Breast epithelium (tissue), 4 donors: ENCODE measurements at regions of chr4 and their contacts with region 1.

Region 1: GRCh38 chr4:135032670-135033069 is 831.1 kb upstream of the PABPC4L start:
- DNase-seq: no peak
- H3K4me3 ChIP-seq: no peak overlapping the region
- H3K27ac ChIP-seq: no peak overlapping the region
- H3K4me1 ChIP-seq: no peaks in the 10 kb centered on the region
- H3K27me3 ChIP-seq: no peaks in the 10 kb centered on the region
- CTCF ChIP-seq: no peak
- POLR2A ChIP-seq: no peak

Region 2: DNA sequence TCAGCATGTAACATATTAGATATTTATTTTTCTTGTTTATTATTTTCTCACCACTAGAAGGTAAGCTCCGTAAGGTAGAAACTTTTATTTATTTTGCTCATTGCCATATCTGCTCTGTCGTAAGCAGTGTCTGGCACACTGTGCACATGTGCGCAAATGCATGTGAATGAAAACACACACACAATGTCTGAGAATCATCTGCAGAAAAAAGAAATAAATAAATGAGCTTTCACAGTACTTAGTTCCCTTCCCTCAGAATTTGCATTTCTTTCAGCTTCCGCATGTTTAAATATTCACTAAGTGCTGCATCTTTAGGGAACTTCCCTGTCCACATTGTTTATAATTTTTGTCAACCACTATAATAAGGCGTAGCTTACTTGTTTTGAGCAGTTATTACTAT is 131.9 kb after region 1 on chr4:
- intact Hi-C with region 1: no loop called
- DNase-seq: no peak
- H3K4me3 ChIP-seq: no peak overlapping the region
- H3K27ac ChIP-seq: no peak overlapping the region
- H3K4me1 ChIP-seq: no peaks in the 10 kb centered on the region
- H3K27me3 ChIP-seq: no peaks in the 10 kb centered on the region
- CTCF ChIP-seq: no peak
- POLR2A ChIP-seq: no peak

Region 3: DNA sequence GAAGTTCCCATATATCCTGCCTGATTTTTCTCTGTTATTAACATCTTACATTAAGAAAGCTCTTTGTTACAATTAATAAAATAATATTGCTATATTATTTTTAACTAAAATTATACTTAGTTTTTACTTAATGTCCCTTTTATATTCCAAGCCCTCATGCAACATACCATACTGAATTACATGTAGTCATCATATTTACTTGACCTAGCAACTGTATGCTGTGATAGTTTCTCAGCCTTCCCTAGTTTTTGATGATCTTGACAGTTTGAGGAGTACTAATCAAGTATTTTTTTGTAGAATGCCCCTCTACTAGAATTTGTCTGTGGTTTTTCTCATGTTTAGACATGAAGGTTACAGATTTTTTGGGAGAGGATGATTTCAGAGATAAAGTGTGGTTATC is 672.7 kb after region 1 on chr4:
- intact Hi-C with region 1: loop called (anchors 10 kb)
- DNase-seq: no peak
- H3K4me3 ChIP-seq: no peak overlapping the region
- H3K27ac ChIP-seq: no peak overlapping the region
- H3K4me1 ChIP-seq: no peaks in the 10 kb centered on the region
- H3K27me3 ChIP-seq: no peaks in the 10 kb centered on the region
- CTCF ChIP-seq: no peak
- POLR2A ChIP-seq: no peak